Right cardiac atrium (tissue), 5 donors: ENCODE measurements at regions of chr11 and their contacts with region 1.

Region 1: DNA sequence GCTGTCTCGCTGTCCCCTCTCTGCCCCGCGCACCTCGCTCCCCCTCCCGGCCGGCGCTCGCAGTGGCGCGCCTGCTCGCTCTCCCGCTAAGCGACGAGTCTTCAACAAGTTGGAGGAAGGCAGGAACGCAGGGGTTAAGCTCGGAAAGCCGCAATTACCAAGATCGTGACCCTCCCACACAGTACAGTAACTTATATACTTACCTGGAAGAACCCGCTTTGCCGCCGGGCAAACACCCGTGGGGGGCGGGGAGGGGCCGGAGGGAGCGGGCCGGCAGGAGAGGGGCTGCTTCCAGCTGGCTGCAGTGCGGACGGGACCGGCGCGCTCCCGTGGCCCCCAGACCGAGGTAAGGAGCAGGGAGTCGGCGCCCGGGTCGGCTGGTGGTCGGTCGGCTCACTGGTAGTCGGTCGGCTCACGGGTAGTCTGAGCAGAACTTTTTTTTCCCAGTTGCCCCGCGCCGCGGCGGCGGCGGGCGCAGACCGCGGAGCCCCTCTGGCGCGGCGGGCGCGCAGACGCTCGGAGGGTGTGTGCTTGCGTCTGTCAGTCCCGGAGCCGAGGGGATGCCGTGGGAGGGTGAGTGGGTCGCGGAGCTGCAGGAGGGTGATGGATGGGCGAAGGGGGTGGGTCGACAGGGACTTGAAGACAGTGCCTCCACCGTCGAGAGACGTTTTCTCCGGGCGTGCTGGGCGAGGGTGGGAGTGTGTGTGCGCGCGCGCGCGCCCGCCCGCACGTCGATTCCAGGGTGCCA is 101.2 kb upstream of the HSD17B12 start:
- DNase-seq: peak in 2 of 3 donors; percentile 56 to 61
- ATAC-seq: peak in 1 of 2 donors; percentile 7
- H3K4me3 ChIP-seq: peak overlapping the region; percentile 53
- H3K27ac ChIP-seq: no peak overlapping the region
- H3K4me1 ChIP-seq: peaks cover 10% of the 10 kb centered on the region
- H3K27me3 ChIP-seq: no peaks in the 10 kb centered on the region

Region 2: GRCh38 chr11:43508511-43508918 is 70.8 kb before region 1 on chr11:
- intact Hi-C with region 1: no loop called
- DNase-seq: no peak
- ATAC-seq: no peak
- H3K4me3 ChIP-seq: no peak overlapping the region
- H3K27ac ChIP-seq: no peak overlapping the region
- H3K4me1 ChIP-seq: no peaks in the 10 kb centered on the region
- H3K27me3 ChIP-seq: no peaks in the 10 kb centered on the region

Region 3: DNA sequence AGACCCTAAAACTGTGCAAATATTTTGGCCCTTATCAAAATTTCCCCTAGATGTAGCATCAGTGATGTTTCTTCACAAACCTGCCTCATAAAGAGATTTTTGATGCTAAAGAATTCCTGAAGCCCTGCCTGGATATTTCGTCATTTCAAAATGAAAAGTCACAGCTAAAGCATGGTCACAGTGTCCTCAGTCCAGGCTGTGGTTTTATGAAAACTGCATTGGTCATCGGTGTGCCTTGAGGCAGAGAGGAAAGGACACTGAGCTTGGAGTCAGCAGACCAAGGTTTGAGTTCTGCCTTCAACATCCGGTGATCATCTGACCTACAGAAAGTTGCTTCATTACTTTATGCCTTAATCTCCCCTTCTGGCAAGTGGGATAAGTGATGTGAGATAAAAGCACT is 266.5 kb after region 1 on chr11:
- intact Hi-C with region 1: loop called in 1 of 4 experiments (anchors 10 kb)
- DNase-seq: no peak
- ATAC-seq: no peak
- H3K4me3 ChIP-seq: no peak overlapping the region
- H3K27ac ChIP-seq: no peak overlapping the region
- H3K4me1 ChIP-seq: no peaks in the 10 kb centered on the region
- H3K27me3 ChIP-seq: no peaks in the 10 kb centered on the region